ENCODE measurements at regions of chr21 and their contacts with region 1.

Region 1: DNA sequence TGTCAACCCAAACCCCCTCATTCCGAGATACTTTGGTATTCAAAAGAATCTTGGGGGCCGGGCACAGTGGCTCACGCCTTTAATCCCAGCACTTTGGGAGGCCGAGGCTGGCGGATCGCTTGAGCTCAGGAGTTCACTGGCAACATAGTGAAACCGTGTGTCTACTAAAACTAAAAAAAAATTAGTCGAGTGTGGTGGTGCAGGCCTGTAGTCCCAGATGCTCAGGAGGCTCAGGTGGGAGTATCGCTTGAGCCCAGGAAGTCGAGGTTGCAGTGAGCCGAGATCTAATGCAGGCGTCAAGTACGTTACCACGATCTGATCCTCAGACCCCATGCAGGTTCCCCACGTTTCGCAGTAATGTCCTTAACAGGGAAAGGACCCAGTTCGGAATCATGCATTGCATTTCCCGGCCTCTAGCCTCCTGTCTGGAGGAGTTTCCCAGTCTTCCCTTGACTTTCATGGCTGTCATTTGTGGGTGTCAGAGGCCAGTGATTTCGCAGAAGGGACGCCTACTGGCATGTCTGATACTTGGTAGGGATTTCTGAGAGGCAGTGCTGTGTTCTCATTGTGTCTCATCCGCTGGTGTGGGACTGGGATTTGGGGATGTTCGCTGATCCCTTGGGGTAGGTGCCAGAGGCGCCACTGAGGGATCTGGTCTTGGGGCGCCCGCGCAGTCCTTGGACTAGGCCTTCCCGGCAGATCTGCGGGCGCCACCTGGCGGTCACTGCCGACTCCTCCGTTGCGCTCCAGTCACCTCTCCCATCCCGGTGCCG is 39.3 kb upstream of the HMGN1 start:
- DNase-seq: peak; percentile 74 to 85
- ATAC-seq: peak; percentile 63 to 70
- H3K4me3 ChIP-seq: peak overlapping the region; percentile 50 to 69 (median 61)
- H3K27ac ChIP-seq: peak overlapping the region; percentile 79 to 86 (median 83)
- H3K4me1 ChIP-seq: peaks cover 14 to 26% of the 10 kb centered on the region in 2 donors
- H3K27me3 ChIP-seq: no peaks in the 10 kb centered on the region
- CTCF ChIP-seq: peak; percentile 73 to 97 (median 91)
- POLR2A ChIP-seq: no peak

Region 2: DNA sequence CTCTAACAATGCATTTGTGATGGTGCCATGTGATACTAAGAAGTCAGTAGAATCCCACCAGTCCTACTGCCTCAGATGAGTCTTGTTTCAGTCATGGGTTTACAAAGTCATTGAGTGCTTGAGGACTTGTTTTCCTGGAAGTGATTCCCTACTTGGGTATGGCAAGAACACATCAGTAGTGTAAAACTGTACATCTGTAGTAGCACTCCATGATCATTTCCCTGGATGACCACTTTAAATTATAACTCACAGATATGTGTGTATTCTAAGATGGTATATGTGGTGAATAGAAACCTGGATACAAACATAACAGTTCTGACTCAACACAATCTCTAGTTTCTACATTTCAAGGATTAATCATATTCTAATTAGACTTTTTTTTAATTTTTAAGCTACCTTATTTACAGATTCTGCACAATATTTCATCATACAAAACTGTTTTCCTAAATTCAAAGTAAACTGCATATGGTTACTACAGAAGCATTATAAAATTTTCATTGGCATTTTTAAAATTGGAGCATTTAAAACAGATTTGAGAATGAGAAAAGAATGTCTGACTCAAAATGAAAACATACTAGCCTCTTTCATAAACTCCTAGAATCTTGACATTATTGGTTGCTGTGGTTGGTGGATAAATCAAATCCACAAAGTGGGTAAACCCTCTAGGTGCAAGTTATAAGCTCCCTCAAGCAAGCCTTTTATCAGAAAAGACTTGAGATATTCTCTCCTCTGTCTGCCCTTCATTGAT is 198.2 kb before region 1 on chr21:
- in situ Hi-C with region 1: loop called in 3 of 4 experiments (anchors 5 to 25 kb)
- intact Hi-C with region 1: no loop called
- DNase-seq: no peak
- ATAC-seq: no peak
- H3K4me3 ChIP-seq: no peak overlapping the region
- H3K27ac ChIP-seq: no peak overlapping the region
- H3K4me1 ChIP-seq: no peaks in the 10 kb centered on the region
- H3K27me3 ChIP-seq: no peaks in the 10 kb centered on the region
- CTCF ChIP-seq: no peak
- POLR2A ChIP-seq: no peak

Region 3: DNA sequence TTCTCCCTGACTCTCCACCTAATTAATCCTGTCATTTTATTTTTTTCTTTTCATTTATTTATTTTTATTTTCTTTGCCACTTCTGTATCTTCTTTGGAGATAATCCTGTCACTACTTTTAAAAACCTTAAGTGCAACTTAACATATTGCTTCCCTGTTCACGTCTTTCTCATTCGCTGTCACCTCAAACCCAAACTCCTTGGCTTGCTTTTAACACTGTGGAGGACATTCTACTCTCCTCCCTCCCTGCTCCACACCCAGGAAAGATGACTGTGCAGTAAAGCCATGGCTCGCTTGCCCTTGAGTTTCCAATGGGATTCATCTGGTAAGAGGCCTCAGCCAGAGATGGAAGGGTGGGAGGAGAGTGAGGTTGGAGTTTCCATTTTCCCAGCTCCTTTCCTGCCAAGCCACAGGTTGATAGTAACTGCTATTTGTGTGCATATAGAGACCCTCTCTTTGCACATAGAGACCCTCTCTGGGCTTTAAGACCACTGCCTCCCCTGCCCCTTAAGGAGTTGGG is 68.4 kb before region 1 on chr21:
- in situ Hi-C with region 1: loop called (anchors 5 to 10 kb)
- intact Hi-C with region 1: no loop called
- DNase-seq: no peak
- ATAC-seq: no peak
- H3K4me3 ChIP-seq: no peak overlapping the region
- H3K27ac ChIP-seq: peak overlapping the region in 1 of 4 donors; percentile 65
- H3K4me1 ChIP-seq: peaks cover under 1 to 8% of the 10 kb centered on the region in 2 donors
- H3K27me3 ChIP-seq: no peaks in the 10 kb centered on the region
- CTCF ChIP-seq: no peak
- POLR2A ChIP-seq: no peak

Region 4: GRCh38 chr21:39349211-39350093 is 38.8 kb before region 1 on chr21:
- in situ Hi-C with region 1: loop called in 1 of 4 experiments (anchors 5 kb)
- intact Hi-C with region 1: loop called (anchors 1 kb)
- DNase-seq: peak; percentile 89 to 92
- ATAC-seq: peak; percentile 91 to 95
- H3K4me3 ChIP-seq: peak overlapping the region; percentile 57 to 81 (median 72)
- H3K27ac ChIP-seq: peak overlapping the region; percentile 79 to 87 (median 82)
- H3K4me1 ChIP-seq: peaks cover 15% of the 10 kb centered on the region in 2 donors
- H3K27me3 ChIP-seq: no peaks in the 10 kb centered on the region
- CTCF ChIP-seq: no peak
- POLR2A ChIP-seq: peak in 1 of 2 donors; percentile 8